Stomach (tissue), 19 donors: ENCODE measurements at regions of chr12 and their contacts with region 1.

Region 1: DNA sequence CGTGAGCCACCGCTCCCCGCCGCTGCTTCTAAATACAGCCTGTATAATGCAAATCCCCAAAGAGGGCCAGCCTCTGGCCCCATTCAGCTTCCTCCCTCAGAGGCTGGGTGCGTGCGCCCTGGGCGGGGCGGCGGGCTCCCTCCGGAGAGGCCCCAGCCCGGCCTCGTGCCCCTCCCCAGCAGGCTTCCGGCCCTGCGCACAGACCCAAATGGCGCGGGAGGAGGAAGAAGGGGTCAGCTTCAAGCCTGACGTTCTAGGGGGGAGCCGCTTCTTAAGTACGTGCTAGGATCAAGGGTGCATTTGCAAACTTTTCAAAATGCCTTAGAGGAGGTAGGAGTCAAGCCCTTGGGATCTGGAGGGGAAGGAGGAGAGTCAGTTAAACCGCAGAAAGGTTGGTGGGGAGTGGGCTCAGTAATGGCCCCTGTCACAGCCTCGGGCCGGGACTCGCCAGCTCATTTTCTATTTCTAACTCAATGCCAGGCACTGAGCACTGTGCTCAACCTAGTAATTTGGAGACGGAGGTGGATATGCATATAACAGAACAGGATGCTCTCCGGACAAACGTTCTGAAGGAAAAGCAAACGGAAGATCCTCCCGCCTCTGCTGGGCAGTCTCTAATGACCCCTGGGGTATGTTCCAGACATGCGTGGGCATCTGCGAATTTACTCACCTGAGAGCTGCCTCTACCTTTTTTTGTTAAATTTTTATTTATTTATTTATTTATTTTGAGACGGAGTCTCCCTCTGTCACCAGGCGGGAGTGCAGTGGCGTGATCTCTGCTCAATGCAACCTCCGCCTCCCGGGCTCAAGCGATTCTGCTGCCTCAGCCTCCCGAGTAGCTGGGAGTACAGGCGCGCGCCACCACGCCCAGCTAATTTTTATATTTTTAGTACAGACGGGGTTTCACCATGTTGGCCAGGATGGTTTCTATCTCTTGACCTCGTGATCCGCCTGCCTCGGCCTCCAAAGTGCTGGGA is 32.3 kb downstream of the NINJ2 start:
- DNase-seq: peak; percentile 72 to 85
- H3K4me3 ChIP-seq: peak overlapping the region; percentile 13 to 38 (median 25)
- H3K27ac ChIP-seq: peak overlapping the region in 4 of 5 donors; percentile 58 to 90 (median 74)
- H3K4me1 ChIP-seq: peaks cover 15 to 47% (median 22%) of the 10 kb centered on the region in 4 donors
- H3K27me3 ChIP-seq: no peaks in the 10 kb centered on the region
- CTCF ChIP-seq: no peak
- EP300 ChIP-seq: no peak
- POLR2A ChIP-seq: no peak

Region 2: DNA sequence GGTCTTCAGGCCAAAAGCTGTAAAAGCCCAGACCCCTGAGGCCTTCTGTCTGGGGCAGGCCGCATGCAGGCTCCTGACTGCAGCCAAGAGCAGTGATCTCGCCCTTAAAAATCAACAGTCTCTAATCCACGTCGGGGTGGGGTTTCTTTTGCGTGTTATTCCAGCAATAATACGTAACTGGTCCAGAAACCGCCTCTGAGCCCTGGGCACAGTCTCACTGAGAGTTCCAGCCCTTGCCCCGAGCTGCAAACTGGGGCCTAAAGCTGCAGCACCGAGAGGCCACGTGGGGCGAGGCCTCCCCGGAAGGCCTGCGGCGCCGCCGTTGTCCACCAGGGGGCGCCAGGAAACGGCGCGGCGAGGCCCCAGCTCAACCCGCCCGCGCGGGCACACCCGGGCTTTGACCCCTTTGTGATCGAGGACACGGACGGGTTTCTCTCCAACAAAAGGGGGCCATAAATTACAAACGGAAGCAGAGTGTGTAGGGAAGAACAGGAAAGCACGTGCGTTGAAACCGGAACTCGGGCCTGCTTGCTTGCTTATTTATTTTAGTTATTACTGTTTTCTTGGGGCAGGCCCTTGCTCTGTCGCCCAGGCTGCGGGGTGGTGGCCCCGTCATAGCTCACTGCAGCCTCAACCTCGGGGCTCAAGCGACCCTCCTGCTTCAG is 54.9 kb before region 1 on chr12:
- intact Hi-C with region 1: loop called (anchors 10 kb)
- DNase-seq: peak; percentile 82 to 91
- H3K4me3 ChIP-seq: peak overlapping the region in 3 of 4 donors; percentile 3 to 14 (median 10)
- H3K27ac ChIP-seq: peak overlapping the region; percentile 9 to 80 (median 61)
- H3K4me1 ChIP-seq: peaks cover 18 to 56% (median 39%) of the 10 kb centered on the region in 4 donors
- H3K27me3 ChIP-seq: no peaks in the 10 kb centered on the region
- CTCF ChIP-seq: peak in 6 of 7 experiments; percentile 56 to 100 (median 98)
- EP300 ChIP-seq: no peak
- POLR2A ChIP-seq: no peak